Activated naive CD4-positive, alpha-beta T cell treated with anti-CD3 and anti-CD28 coated beads for 36 hours (primary cell): ENCODE measurements at regions of chr2 and their contacts with region 1.

Region 1: GRCh38 chr2:205808486-205809121 is 126.3 kb downstream of the NRP2 start:
- DNase-seq: no peak
- H3K4me3 Mint-ChIP-seq: no peak overlapping the region
- H3K27ac Mint-ChIP-seq: no peak overlapping the region
- H3K4me1 Mint-ChIP-seq: no peaks in the 10 kb centered on the region
- H3K27me3 Mint-ChIP-seq: no peaks in the 10 kb centered on the region

Region 2: DNA sequence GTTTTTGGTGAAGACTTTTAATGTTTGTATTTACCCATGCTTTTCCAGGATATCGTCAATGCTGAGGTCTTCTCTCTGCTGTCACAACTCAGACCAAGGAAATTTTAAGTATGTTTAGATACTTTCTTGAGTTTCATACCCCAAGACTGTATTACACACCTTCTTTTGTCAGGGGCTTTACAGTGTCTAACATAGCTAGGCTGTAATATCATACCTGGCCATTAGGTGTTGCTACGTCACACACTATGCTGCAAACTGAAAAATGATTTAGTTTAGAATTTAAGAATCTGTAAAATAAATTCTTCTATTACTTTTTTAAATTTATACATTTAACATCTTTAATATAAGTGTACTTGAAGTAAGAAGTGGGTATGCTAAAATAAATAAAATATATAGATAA is 484.7 kb before region 1 on chr2:
- CTCF ChIA-PET with region 1: no interaction called
- intact Hi-C with region 1: loop called (anchors 1 kb)
- DNase-seq: peak; percentile 13
- H3K4me3 Mint-ChIP-seq: no peak overlapping the region
- H3K27ac Mint-ChIP-seq: no peak overlapping the region
- H3K4me1 Mint-ChIP-seq: no peaks in the 10 kb centered on the region
- H3K27me3 Mint-ChIP-seq: no peaks in the 10 kb centered on the region

Region 3: GRCh38 chr2:205766779-205767359 is 41.7 kb before region 1 on chr2:
- CTCF ChIA-PET with region 1: interaction called, 5 read pairs
- intact Hi-C with region 1: loop called (anchors 1 kb)
- DNase-seq: peak; percentile 80
- H3K4me3 Mint-ChIP-seq: no peak overlapping the region
- H3K27ac Mint-ChIP-seq: no peak overlapping the region
- H3K4me1 Mint-ChIP-seq: peaks cover 12% of the 10 kb centered on the region
- H3K27me3 Mint-ChIP-seq: peaks cover 23% of the 10 kb centered on the region

Region 4: GRCh38 chr2:205776139-205776538 is 32.5 kb before region 1 on chr2:
- CTCF ChIA-PET with region 1: interaction called, 3 read pairs
- intact Hi-C with region 1: loop called (anchors 1 kb)
- DNase-seq: peak; percentile 58
- H3K4me3 Mint-ChIP-seq: no peak overlapping the region
- H3K27ac Mint-ChIP-seq: no peak overlapping the region
- H3K4me1 Mint-ChIP-seq: peaks cover 7% of the 10 kb centered on the region
- H3K27me3 Mint-ChIP-seq: peaks cover 32% of the 10 kb centered on the region

Region 5: GRCh38 chr2:205787761-205788160 is 20.8 kb before region 1 on chr2:
- CTCF ChIA-PET with region 1: no interaction called
- intact Hi-C with region 1: no loop called
- DNase-seq: no peak
- H3K4me3 Mint-ChIP-seq: no peak overlapping the region
- H3K27ac Mint-ChIP-seq: no peak overlapping the region
- H3K4me1 Mint-ChIP-seq: no peaks in the 10 kb centered on the region
- H3K27me3 Mint-ChIP-seq: no peaks in the 10 kb centered on the region

Region 6: DNA sequence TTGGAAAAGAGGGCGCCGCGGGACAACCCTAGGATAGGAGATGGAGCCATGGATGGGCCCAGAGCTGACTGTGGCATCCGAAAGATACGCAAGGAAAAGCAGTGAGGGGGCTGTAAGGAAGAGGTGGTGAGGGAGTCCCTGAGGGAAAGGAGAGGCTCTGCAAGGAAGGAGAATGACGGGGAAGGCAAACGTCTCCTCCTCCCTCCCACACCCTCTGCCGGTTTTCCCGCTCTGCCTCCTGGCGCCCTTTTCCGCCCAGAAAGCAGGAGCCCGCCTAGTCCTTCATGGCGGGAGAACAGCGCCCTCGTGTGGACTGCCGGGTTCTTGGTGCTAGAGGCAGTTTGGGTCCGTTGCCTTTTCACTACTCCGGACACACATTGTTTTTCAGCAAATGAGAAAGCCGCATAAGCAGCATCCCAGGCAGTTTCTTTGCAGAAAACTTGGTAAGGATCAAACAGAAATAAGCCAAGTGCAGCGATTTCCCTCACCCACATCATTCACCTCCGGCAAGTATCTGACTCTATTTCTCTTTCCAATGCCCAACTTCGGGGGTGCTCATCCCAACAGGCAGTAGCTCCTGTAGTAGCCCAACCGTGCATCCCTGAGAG is 77.0 kb after region 1 on chr2:
- CTCF ChIA-PET with region 1: interaction called, 6 read pairs
- intact Hi-C with region 1: loop called (anchors 1 kb)
- DNase-seq: peak; percentile 86
- H3K4me3 Mint-ChIP-seq: no peak overlapping the region
- H3K27ac Mint-ChIP-seq: no peak overlapping the region
- H3K4me1 Mint-ChIP-seq: no peaks in the 10 kb centered on the region
- H3K27me3 Mint-ChIP-seq: peaks cover 16% of the 10 kb centered on the region

Region 7: GRCh38 chr2:205925373-205926337 is 117.1 kb after region 1 on chr2:
- CTCF ChIA-PET with region 1: interaction called, 4 read pairs
- intact Hi-C with region 1: loop called (anchors 1 kb)
- DNase-seq: peak; percentile 80
- H3K4me3 Mint-ChIP-seq: peak overlapping the region; percentile 8
- H3K27ac Mint-ChIP-seq: no peak overlapping the region
- H3K4me1 Mint-ChIP-seq: peaks cover 8% of the 10 kb centered on the region
- H3K27me3 Mint-ChIP-seq: peaks cover 39% of the 10 kb centered on the region